A549 (cell line): ENCODE measurements at regions of chr22 and their contacts with region 1.

Region 1: DNA sequence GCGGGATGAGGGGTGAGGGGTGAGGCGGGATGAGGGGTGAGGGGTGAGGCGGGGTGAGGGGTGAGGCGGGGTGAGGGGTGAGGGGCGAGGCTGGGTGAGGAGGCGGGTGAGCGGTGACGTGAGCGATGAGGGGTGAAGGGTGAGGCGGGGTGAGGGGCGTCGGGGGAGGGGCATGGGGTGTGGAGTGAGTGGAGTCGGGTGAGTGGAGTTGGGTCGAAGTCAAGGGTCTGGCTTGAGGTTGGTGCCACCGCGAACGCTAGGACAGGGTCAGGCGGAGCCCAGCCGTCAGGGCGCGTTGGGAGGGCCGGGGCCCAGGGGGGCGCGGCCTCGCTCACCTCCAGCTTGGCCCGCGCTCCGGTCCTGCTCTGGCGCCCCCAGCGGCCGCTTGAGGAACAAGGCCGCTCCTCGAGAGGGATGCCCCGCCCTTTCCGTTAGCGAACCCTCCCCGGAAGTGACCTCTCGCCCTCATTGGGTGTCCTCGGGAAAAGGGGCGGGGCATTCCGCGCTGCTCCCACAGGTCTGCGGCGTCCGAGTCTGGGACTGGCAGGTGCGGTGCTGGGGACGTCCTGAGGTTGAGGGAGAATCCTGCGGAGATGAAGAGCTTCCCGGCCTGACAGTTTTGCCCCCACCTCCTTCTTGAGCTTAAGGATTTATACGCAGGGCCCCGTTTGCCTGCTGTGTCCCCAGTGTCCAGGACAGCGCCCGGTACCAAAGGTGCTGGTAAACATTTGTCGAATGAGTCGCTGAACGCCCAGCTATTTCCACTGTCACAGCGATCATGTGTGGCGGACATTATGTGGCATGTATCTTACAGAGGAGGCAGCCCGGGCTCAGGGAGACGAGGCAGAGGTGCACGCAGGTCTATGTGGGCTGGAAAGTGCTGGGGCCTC is at the start of gene SYCE3:
- DNase-seq: peak; percentile 73 to 91
- ATAC-seq: peak; percentile 90 to 97
- H3K4me3 ChIP-seq: peak within 1 kb of the TSS; percentile 64
- H3K27ac ChIP-seq: peak within 1 kb of the TSS; percentile 76 to 96
- H3K4me1 ChIP-seq: no peaks in the 10 kb centered on the region
- CTCF ChIP-seq: peak; percentile 73
- EP300 ChIP-seq: no peak
- POLR2A ChIP-seq: peak; percentile 35; the same call in 1 of the 2 replicates
- RAD21 ChIP-seq: peak; percentile 34 to 62; a peak in 4 of 5 replicates
- polyA plus RNA-seq, gene SYCE3: 0.30 and 0.59 TPM in 2 replicates

Region 2: DNA sequence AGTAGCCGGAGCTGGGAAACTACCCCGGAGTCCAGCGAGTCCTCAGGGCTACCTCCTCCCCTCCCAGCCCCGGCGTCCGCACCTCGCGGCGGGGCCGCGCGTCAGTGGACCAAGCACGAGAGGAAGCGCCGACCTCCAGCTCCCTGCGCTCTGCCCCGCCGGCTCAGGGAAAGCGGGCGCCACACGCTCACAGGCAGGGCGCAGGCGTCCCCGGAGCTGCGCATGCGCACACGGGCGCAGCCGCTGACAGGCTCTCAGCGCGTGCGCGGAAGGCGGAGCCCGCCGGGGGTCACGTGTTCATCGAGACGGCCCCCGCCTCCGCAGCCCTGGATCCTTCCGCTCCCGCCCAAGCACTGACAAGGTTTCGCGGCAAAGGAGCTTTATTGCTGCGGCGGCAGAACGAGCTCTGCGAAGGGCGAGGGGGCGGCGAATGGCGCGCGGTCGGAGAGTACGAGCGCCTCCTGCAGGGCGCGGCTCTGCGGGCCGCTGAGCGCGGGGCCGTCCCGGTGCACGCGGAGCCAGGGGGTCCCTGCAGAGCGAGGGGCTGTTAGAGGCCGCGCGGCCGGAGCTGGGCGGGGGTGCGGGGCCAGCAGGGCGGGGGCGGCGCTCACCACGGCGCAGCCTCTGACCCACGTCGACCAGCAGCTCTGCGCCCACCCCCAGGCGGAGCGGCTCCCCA is 37.2 kb before region 1 on chr22 and contains the start of gene SCO2:
- CTCF ChIA-PET with region 1: interaction called, 31 read pairs
- POLR2A ChIA-PET with region 1: interaction called, 8 read pairs
- DNase-seq: peak; percentile 87 to 97
- ATAC-seq: peak; percentile 30 to 67
- H3K4me3 ChIP-seq: peak within 1 kb of the TSS; percentile 70
- H3K27ac ChIP-seq: peak within 1 kb of the TSS; percentile 92 to 99
- H3K4me1 ChIP-seq: peaks cover 20% of the 10 kb centered on the region
- CTCF ChIP-seq: no peak
- EP300 ChIP-seq: no peak
- POLR2A ChIP-seq: peak; percentile 64
- RAD21 ChIP-seq: no peak
- polyA plus RNA-seq, gene SCO2: 0.37 and 1.9 TPM in 2 replicates

Region 3: DNA sequence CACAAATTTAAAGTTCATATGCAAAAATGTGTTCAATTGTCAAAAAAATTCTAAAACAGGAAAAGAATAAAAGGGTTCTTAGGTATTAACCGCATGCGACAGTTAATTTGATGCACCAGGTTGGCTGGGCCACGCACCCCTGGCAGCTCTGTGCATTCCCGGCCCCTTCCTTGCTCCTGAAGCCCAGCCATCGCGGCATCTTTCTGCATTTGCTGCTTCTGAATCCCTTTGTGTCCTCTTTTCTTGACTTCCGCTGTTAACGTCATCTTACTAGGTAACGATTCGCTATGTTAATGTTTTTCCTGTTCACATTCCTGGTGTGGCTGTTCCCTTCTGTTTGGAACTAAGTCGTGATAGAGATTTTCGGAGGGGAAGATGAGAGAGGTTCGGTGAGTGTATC is 25.0 kb before region 1 on chr22:
- CTCF ChIA-PET with region 1: interaction called, 25 read pairs
- POLR2A ChIA-PET with region 1: interaction called, 5 read pairs
- DNase-seq: no peak
- ATAC-seq: no peak
- H3K4me3 ChIP-seq: no peak overlapping the region
- H3K27ac ChIP-seq: peak overlapping the region in 1 of 2 experiments; percentile 92; a peak in 3 of 6 replicates
- H3K4me1 ChIP-seq: peaks cover 57% of the 10 kb centered on the region
- CTCF ChIP-seq: no peak
- EP300 ChIP-seq: no peak
- POLR2A ChIP-seq: no peak
- RAD21 ChIP-seq: no peak

Region 4: GRCh38 chr22:50544078-50544745 is 18.6 kb before region 1 on chr22:
- CTCF ChIA-PET with region 1: interaction called, 25 read pairs
- POLR2A ChIA-PET with region 1: interaction called, 5 read pairs
- DNase-seq: peak; percentile 82 to 85
- ATAC-seq: peak; percentile 74 to 89
- H3K4me3 ChIP-seq: peak overlapping the region; percentile 24; the same call in 1 of the 3 replicates
- H3K27ac ChIP-seq: peak overlapping the region; percentile 82 to 84
- H3K4me1 ChIP-seq: peaks cover 57% of the 10 kb centered on the region
- CTCF ChIP-seq: peak; percentile 61
- EP300 ChIP-seq: no peak
- POLR2A ChIP-seq: no peak
- RAD21 ChIP-seq: peak; percentile 26 to 44; a peak in 4 of 5 replicates

Region 5: GRCh38 chr22:50576070-50576469 is 13.3 kb after region 1 on chr22:
- CTCF ChIA-PET with region 1: interaction called, 53 read pairs
- POLR2A ChIA-PET with region 1: no interaction called
- DNase-seq: peak; percentile 20 to 69
- ATAC-seq: peak; percentile 63 to 81; a peak in 5 of 6 replicates
- H3K4me3 ChIP-seq: no peak overlapping the region
- H3K27ac ChIP-seq: no peak overlapping the region
- H3K4me1 ChIP-seq: peaks cover under 1% of the 10 kb centered on the region; the same call in 1 of the 3 replicates
- CTCF ChIP-seq: no peak; the same call in 2 of the 3 replicates
- EP300 ChIP-seq: no peak
- POLR2A ChIP-seq: no peak
- RAD21 ChIP-seq: peak; percentile 28 to 69; a peak in 3 of 5 replicates